ENCODE measurements at regions of chr6 and their contacts with region 1.

Region 1: DNA sequence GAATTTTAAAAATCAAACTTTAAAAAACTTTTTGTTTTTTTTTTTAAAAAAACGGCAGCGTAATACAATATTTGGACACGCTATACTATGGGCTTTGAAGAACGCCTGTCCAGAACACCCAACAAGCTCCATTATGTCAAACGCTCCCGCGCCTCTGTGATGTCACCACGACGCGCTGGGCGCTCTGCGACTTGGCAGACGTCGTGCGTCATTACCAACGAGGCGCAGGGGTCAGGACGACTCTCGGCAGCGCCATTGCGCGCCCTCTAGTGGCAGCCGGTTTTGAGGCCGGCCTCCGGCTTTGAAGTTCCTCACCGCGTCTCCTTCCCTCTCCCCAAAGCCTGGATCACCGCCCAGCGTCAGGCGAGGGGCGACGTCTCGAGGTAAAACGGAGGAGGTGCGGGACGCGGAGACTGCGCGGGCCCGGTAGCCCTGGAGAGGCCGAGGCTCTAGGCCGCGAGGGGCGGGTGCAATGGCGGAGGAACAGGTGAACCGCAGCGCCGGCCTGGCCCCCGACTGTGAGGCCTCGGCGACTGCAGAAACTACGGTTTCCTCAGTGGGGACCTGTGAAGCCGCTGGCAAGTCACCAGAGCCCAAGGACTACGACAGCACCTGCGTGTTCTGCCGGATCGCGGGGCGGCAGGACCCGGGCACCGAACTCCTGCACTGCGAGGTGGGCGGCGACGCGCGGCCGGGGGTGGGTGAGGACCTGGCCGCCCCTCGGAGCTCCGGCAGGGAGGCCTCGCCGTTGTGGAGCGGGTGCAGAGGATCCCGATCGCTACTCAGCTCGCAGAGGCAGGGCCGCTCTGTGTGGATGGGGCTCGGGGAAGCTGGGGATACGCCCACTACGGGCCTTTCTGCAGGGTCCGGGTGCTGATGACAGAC is at the start of gene HINT3:
- DNase-seq: peak; percentile 99
- H3K4me3 Mint-ChIP-seq: no peak within 1 kb of the TSS
- H3K27ac Mint-ChIP-seq: peak within 1 kb of the TSS; percentile 82
- H3K4me1 Mint-ChIP-seq: peaks cover 4% of the 10 kb centered on the region
- H3K27me3 Mint-ChIP-seq: peaks cover 1% of the 10 kb centered on the region
- total RNA-seq, gene HINT3: 8.5 and 8.9 TPM in 2 replicates

Region 2: GRCh38 chr6:125301435-125302391 is 655.0 kb before region 1 on chr6 and contains the start of gene HDDC2:
- intact Hi-C with region 1: loop called (anchors 5 kb)
- DNase-seq: peak; percentile 87
- H3K4me3 Mint-ChIP-seq: peak within 1 kb of the TSS; percentile 88
- H3K27ac Mint-ChIP-seq: peak within 1 kb of the TSS; percentile 88
- H3K4me1 Mint-ChIP-seq: peaks cover 37% of the 10 kb centered on the region
- H3K27me3 Mint-ChIP-seq: peaks cover 19% of the 10 kb centered on the region
- total RNA-seq, gene HDDC2: 89.6 and 92.4 TPM in 2 replicates

Region 3: DNA sequence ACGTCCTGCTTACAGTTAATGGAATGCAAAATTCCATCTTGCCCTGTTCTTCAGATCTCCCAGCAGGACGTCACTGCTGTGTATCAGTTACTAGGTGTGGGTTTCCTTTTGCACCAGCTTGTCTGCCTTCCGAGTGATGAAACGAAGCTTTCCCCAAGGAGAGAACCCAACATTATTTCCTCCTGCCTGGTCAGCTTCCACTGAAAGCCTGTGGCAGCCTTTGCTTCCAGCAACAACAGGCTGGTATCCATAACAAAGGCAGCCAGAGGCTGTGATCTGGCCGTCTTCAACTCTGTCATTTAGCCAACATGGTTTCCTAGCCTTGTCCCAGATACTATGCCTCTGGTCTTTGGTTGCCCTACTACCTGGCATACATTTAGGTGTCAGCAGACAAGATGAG is 286.2 kb before region 1 on chr6:
- intact Hi-C with region 1: no loop called
- DNase-seq: no peak
- H3K4me3 Mint-ChIP-seq: no peak overlapping the region
- H3K27ac Mint-ChIP-seq: no peak overlapping the region
- H3K4me1 Mint-ChIP-seq: no peaks in the 10 kb centered on the region
- H3K27me3 Mint-ChIP-seq: peaks cover 16% of the 10 kb centered on the region

Region 4: DNA sequence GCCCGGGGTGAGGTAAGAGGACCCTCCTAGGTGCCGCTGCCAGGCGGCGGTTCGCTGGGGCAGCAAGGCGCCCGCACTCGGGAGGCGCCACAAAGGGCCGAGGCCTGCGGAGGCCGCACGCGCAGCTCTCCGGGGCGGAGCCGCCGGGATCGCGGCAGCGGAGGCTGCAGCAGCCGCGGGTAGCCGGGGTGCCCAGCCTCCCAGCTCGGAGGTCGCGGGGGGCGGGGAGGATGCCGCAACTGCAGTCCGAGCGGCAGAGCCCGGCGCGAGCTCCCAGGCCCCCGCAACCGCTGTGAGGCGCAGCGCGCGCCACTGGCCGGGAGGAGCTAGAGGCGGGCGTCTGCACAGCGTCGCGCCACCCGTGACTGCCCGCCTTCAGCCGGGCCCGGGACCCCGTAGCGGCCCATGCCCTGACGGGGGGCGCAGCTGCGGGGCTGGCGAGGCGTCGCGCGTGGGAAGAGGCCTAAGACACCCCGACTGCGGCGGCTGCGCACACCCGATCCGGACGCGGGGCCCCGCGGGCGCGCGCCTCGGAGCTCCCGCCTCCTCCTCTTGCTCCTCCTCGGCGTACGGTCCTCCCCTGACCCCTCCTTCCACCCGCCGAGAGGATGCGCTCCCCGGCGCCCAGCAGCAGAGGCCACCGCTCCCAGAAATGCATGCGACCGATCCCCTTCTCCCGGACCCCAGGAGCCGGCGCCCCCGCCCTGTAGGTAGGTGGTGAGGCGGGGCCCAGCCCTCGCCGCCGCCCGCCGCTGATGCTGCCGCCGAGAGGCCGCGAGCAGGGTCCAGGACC is 166.2 kb before region 1 on chr6 and contains the start of gene NCOA7:
- intact Hi-C with region 1: loop called (anchors 1 kb)
- DNase-seq: peak; percentile 95
- H3K4me3 Mint-ChIP-seq: peak within 1 kb of the TSS; percentile 96
- H3K27ac Mint-ChIP-seq: peak within 1 kb of the TSS; percentile 99
- H3K4me1 Mint-ChIP-seq: peaks cover 49% of the 10 kb centered on the region
- H3K27me3 Mint-ChIP-seq: no peaks in the 10 kb centered on the region
- total RNA-seq, gene NCOA7: 52.5 and 53.7 TPM in 2 replicates

Region 5: DNA sequence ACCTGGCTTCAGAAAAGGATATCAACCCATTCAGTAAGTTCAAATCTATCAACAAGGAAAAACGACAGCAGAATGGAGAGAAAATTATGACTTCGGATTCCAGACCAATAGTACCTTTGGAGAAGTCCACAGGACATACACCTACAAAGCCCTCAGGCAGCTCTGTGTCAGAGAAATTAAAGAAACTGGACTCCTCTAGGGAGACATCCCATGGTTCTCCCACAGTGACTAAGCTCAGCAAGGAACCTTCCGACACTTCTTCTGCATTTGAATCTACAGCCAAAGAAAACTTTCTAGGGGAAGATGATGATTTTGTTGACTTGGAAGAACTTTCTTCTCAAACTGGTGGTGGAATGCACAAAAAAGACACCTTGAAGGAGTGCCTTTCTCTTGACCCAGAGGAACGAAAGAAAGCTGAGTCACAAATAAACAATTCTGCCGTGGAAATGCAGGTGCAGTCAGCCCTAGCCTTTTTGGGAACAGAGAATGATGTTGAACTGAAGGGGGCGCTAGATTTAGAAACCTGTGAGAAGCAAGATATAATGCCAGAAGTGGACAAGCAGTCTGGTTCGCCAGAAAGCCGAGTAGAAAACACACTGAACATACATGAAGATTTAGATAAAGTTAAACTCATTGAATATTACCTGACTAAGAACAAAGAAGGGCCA is 67.6 kb before region 1 on chr6:
- intact Hi-C with region 1: loop called (anchors 1 kb)
- DNase-seq: peak; percentile 75
- H3K4me3 Mint-ChIP-seq: no peak overlapping the region
- H3K27ac Mint-ChIP-seq: no peak overlapping the region
- H3K4me1 Mint-ChIP-seq: peaks cover 5% of the 10 kb centered on the region
- H3K27me3 Mint-ChIP-seq: no peaks in the 10 kb centered on the region

Region 6: GRCh38 chr6:125918681-125919566 is 37.8 kb before region 1 on chr6:
- intact Hi-C with region 1: loop called (anchors 1 kb)
- DNase-seq: peak; percentile 89
- H3K4me3 Mint-ChIP-seq: peak overlapping the region; percentile 88
- H3K27ac Mint-ChIP-seq: peak overlapping the region; percentile 94
- H3K4me1 Mint-ChIP-seq: peaks cover 51% of the 10 kb centered on the region
- H3K27me3 Mint-ChIP-seq: no peaks in the 10 kb centered on the region

Region 7: GRCh38 chr6:125974214-125974866 is 17.6 kb after region 1 on chr6:
- intact Hi-C with region 1: loop called (anchors 2 kb)
- DNase-seq: no peak
- H3K4me3 Mint-ChIP-seq: no peak overlapping the region
- H3K27ac Mint-ChIP-seq: no peak overlapping the region
- H3K4me1 Mint-ChIP-seq: peaks cover 3% of the 10 kb centered on the region
- H3K27me3 Mint-ChIP-seq: no peaks in the 10 kb centered on the region

Measured in activated CD4-positive, alpha-beta T cell treated with anti-CD3 and anti-CD28 coated beads, Interleukin-2, amount 10 ng/mL, durations not matched to agents 24 days and 14 days (primary cell).